GM10248 (cell line): ENCODE measurements at regions of chr3 and their contacts with region 1.

Region 1: GRCh38 chr3:197454014-197454413 is 101.8 kb downstream of the BDH1 start:
- DNase-seq: peak; percentile 31
- CTCF ChIP-seq: peak; percentile 60

Region 2: GRCh38 chr3:196942226-196942914 is 511.6 kb before region 1 on chr3 and contains the start of gene NCBP2:
- CTCF ChIA-PET with region 1: no interaction called
- POLR2A ChIA-PET with region 1: no interaction called
- DNase-seq: peak; percentile 97
- CTCF ChIP-seq: peak; percentile 75

Region 3: GRCh38 chr3:197443506-197443905 is 10.5 kb before region 1 on chr3:
- CTCF ChIA-PET with region 1: interaction called, 10 read pairs
- POLR2A ChIA-PET with region 1: no interaction called
- DNase-seq: no peak
- CTCF ChIP-seq: no peak

Region 4: GRCh38 chr3:197487908-197488391 is 33.9 kb after region 1 on chr3:
- CTCF ChIA-PET with region 1: no interaction called
- POLR2A ChIA-PET with region 1: no interaction called
- DNase-seq: no peak
- CTCF ChIP-seq: no peak

Region 5: DNA sequence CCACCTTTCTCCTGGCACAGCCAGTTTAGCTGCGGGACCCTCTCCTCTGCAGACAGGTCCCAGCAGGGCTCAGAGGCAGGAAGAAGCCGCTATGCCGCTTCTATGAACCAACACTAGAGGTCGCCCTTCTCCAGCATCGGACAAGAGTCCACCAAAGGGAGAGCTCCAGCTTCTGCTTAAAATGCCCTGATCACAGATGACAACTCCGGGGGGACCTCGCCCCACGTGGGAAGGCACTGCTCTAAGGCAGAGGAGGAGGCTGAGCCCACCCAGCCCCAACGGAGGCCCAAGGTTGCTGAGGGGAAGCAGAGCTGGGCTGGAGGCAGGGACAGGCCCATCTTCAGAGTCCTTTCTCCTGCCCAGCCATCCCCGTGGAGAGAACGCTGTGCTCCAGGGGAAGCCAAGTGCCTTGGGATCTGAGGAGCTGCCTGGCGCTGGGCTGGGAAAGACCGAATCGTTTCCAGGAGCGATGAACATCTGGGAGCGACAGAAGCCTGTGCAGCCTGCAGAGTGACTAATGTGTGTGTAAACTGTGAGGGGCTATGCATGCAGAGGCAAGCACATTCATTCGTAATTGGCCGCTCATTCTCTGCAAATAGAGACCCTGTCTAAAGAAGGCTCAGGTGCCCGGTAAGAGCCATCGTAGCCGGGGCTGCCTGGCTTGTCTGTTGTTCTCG is 145.2 kb after region 1 on chr3:
- CTCF ChIA-PET with region 1: no interaction called
- POLR2A ChIA-PET with region 1: no interaction called
- DNase-seq: peak; percentile 93
- CTCF ChIP-seq: peak; percentile 86